ENCODE measurements at regions of chr7 and their contacts with region 1.

Region 1: DNA sequence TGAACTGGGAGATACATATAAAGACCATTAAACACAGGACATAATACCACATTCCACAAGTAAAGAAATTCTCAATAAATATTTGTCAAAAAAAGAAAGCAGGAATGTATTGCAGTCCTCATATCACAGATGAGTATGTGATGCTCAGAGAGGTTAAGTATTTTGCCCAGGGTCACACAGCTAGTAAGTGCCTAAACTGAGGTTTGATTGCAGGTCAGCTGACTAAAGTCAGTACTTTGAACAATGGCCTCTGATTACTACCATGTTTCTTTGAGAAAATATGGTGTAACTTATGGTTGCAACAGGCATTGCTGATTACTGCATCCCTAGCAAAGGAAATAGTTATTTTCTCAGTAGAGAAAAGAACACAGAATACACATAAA is 267.1 kb downstream of the ELMO1 start:
- DNase-seq: no peak
- ATAC-seq: no peak
- H3K4me3 ChIP-seq: no peak overlapping the region
- H3K27ac ChIP-seq: no peak overlapping the region
- H3K4me1 ChIP-seq: no peaks in the 10 kb centered on the region
- CTCF ChIP-seq: no peak
- EP300 ChIP-seq: no peak
- POLR2A ChIP-seq: no peak
- RAD21 ChIP-seq: no peak

Region 2: DNA sequence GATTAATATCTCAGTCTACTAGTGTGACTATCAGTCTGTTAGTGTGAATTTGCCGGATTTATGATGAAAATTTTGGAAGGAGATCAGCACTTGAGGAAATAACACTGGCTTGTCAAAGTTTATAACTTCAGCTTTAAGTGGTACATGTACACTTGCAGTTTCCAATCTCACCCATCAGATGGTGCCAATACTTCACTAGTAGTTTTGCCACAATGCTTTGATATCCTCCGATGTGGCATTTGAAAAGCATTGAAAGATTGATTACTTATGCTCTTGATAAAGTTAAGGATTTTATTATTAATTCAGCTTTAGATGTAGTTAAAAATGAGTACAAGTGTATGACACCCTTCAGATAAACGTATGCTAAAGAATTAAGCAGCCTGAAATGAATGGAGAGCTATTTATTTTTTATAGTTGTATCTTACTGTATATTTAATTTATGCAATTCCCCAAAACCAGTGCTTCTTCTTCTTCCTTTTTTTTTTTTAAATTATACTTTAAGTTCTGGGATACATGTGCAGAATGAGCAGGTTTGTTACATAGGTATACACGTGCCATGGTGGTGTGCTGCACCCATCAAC is 693.7 kb before region 1 on chr7:
- CTCF ChIA-PET with region 1: interaction called, 50 read pairs
- POLR2A ChIA-PET with region 1: no interaction called
- DNase-seq: peak; percentile 47 to 71
- ATAC-seq: peak; percentile 59 to 75; a peak in 4 of 6 replicates
- H3K4me3 ChIP-seq: no peak overlapping the region
- H3K27ac ChIP-seq: no peak overlapping the region
- H3K4me1 ChIP-seq: no peaks in the 10 kb centered on the region
- CTCF ChIP-seq: peak; percentile 93
- EP300 ChIP-seq: no peak
- POLR2A ChIP-seq: no peak
- RAD21 ChIP-seq: peak; percentile 95 to 97

Region 3: DNA sequence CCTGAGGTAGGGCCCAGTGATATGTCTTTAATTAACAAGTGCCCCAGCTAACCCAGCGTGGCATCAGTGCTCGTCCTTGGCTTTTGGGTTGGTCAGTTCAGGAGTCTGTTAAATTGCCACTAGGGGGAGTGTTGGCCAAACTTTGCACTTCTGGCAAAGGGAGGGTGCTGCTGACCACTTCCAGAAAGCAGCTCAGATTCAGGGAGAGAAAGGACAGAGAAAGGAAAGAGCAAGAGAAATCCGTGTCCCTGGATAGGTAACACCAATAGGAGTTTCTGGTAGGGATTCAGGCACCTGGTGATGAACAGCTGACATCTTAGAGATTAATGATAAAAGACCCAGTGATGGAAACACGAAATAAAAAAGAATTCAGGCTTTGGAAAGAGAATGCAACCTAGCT is 214.2 kb before region 1 on chr7:
- CTCF ChIA-PET with region 1: interaction called, 114 read pairs
- POLR2A ChIA-PET with region 1: interaction called, 7 read pairs
- DNase-seq: peak; percentile 49 to 69
- ATAC-seq: peak; percentile 94 to 100
- H3K4me3 ChIP-seq: no peak overlapping the region
- H3K27ac ChIP-seq: no peak overlapping the region
- H3K4me1 ChIP-seq: peaks cover 10% of the 10 kb centered on the region
- CTCF ChIP-seq: peak; percentile 72
- EP300 ChIP-seq: no peak
- POLR2A ChIP-seq: no peak
- RAD21 ChIP-seq: peak; percentile 72 to 88

Region 4: DNA sequence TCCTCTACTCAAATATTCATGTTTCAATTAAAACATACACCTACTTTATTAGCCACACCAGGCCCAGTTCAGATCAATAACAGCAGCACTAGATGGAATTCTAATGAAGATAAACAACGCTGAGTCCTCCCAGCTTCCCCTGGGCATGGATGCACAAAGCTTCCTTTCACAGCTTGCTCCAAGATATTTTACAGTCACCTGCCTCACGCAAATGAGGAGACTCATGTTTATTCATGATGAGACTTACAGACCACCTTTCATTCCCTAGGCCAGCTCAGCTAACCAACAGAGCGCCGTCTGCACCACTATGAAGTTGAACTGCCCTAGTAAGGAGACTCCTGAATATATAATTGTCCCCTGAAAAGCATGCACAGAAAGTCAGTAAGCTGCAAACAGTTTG is 174.3 kb before region 1 on chr7:
- CTCF ChIA-PET with region 1: interaction called, 12 read pairs
- POLR2A ChIA-PET with region 1: no interaction called
- DNase-seq: no peak
- ATAC-seq: no peak
- H3K4me3 ChIP-seq: no peak overlapping the region
- H3K27ac ChIP-seq: no peak overlapping the region
- H3K4me1 ChIP-seq: no peaks in the 10 kb centered on the region
- CTCF ChIP-seq: no peak
- EP300 ChIP-seq: no peak
- POLR2A ChIP-seq: no peak
- RAD21 ChIP-seq: no peak

Region 5: DNA sequence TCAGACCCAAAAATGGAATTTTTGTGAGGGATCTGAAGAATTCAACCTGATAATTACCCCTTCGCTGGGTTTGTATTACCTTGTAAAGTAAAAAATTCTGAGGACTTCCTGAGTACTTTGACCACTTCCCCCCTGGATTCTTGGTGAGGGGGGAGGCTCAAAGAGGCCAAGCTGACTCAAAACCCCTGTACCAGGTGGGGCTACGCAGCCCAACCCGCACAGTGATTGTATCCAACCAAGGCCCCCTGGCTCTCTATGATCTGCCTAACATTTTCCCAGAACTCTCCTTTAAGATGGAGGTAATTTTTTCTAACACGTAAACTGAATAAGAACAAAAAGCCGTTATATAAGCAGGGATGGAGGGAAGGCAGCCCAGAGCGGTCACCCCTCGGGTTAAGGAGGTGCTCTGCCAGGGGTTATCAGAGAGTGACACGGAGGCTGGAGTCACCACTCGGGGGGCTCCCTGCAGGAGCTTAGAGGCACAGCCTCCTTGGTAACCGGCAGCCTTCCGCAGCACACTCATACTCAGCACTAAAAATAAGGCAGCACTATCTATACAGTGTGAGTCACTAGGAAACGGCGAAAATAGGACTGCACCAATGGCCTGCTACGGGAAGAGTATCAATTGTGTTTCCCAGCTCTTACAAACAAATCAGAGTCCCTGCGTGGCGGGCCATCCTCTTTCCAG is 11.7 kb after region 1 on chr7:
- CTCF ChIA-PET with region 1: interaction called, 17 read pairs
- POLR2A ChIA-PET with region 1: no interaction called
- DNase-seq: no peak
- ATAC-seq: no peak
- H3K4me3 ChIP-seq: no peak overlapping the region
- H3K27ac ChIP-seq: no peak overlapping the region
- H3K4me1 ChIP-seq: no peaks in the 10 kb centered on the region
- CTCF ChIP-seq: no peak
- EP300 ChIP-seq: no peak
- POLR2A ChIP-seq: no peak
- RAD21 ChIP-seq: no peak

Region 6: DNA sequence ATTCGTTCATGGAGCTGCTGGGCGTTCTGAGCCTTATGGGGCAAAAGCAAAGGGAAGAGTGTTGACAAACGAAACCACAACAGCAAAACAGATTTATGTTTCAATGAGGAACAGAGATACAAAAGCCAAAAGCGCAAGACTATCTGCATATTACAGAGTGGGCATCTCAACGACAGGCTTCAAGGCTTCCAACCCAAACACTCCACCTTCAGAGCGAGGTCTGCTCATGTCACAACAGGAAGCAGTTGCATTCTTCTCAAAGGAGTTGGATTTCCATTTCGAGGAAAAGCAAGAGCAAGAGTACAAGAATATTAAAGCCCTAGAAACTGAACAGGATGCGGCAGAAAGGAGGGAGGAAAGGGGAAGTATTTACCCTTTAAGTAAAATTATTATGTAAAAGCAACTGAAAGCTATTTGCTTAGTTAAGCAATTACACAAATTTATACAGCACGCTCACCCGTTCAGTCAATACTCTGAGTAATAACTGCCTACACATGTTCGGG is 77.8 kb after region 1 on chr7:
- CTCF ChIA-PET with region 1: no interaction called
- POLR2A ChIA-PET with region 1: no interaction called
- DNase-seq: no peak
- ATAC-seq: no peak
- H3K4me3 ChIP-seq: no peak overlapping the region
- H3K27ac ChIP-seq: no peak overlapping the region
- H3K4me1 ChIP-seq: no peaks in the 10 kb centered on the region
- CTCF ChIP-seq: no peak
- EP300 ChIP-seq: no peak
- POLR2A ChIP-seq: no peak
- RAD21 ChIP-seq: no peak

Measured in A549 (cell line).